ENCODE measurements at regions of chr1 and their contacts with region 1.

Region 1: DNA sequence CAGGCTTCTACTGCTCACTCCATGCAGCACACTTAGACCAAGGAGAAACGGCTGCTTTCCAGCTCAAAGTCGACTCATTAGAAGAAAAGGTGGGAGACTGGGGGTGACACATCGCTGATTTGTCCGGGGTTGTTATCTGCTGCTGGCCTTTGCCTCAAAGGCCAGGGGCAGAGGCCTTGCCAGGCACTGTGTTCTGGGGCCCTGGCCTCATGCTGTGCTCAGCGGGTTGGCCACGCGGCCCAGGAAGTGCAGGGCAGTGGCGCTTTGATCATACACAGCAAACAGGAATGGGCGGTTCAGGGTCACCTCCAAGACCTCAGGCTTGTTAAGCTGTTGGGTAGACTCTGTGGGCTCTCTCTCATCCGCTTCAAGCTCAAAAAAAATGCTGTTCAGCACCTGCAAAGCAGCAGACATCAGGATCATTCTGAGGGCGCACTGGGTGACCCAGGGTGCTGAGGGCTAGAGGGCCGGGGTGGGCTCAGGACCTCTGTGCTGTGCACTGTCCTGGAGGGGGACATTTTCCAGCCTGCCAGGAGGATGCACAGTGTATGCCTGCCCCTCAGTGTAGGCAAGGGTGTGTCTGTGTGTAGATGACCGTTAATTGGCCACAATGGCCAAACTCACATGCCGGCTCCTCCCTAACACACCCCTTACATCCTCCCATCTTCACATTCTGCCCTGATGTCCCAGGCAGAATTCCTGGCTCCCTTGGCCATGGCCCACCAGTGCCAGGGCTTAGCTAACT is 10.8 kb downstream of the AGT start:
- DNase-seq: peak; percentile 97
- ATAC-seq: peak; percentile 89
- H3K4me3 ChIP-seq: peak overlapping the region in 1 of 3 experiments; percentile 32; a peak in 2 of 6 replicates
- H3K27ac ChIP-seq: peak overlapping the region; percentile 89
- H3K4me1 ChIP-seq: peaks cover 89% of the 10 kb centered on the region
- H3K27me3 ChIP-seq: no peaks in the 10 kb centered on the region
- CTCF ChIP-seq: 0 out of 2 replicates have a peak, but pooled peaks have one; percentile 21
- EP300 ChIP-seq: peak in 1 of 2 experiments; percentile 94; a peak in 3 of 4 replicates
- POLR2A ChIP-seq: no peak; a peak in 1 of 4 replicates
- RAD21 ChIP-seq: no peak; the same call in 1 of the 2 replicates

Region 2: GRCh38 chr1:230495891-230496385 is 207.2 kb before region 1 on chr1:
- CTCF ChIA-PET with region 1: no interaction called
- POLR2A ChIA-PET with region 1: no interaction called
- in situ Hi-C with region 1: no loop called
- intact Hi-C with region 1: no loop called
- DNase-seq: no peak
- ATAC-seq: no peak
- H3K4me3 ChIP-seq: no peak overlapping the region
- H3K27ac ChIP-seq: no peak overlapping the region
- H3K4me1 ChIP-seq: no peaks in the 10 kb centered on the region
- H3K27me3 ChIP-seq: peaks cover 0 to 19% of the 10 kb centered on the region in 2 experiments; a peak in 3 of 5 replicates
- CTCF ChIP-seq: no peak
- EP300 ChIP-seq: no peak
- POLR2A ChIP-seq: no peak
- RAD21 ChIP-seq: no peak

Region 3: GRCh38 chr1:230609208-230609607 is 93.9 kb before region 1 on chr1:
- CTCF ChIA-PET with region 1: no interaction called
- POLR2A ChIA-PET with region 1: no interaction called
- in situ Hi-C with region 1: no loop called
- intact Hi-C with region 1: no loop called
- DNase-seq: no peak
- ATAC-seq: no peak
- H3K4me3 ChIP-seq: no peak overlapping the region
- H3K27ac ChIP-seq: no peak overlapping the region
- H3K4me1 ChIP-seq: peaks cover 22% of the 10 kb centered on the region
- H3K27me3 ChIP-seq: no peaks in the 10 kb centered on the region; a peak in 1 of 5 replicates
- CTCF ChIP-seq: no peak
- EP300 ChIP-seq: no peak
- POLR2A ChIP-seq: no peak
- RAD21 ChIP-seq: no peak

Region 4: DNA sequence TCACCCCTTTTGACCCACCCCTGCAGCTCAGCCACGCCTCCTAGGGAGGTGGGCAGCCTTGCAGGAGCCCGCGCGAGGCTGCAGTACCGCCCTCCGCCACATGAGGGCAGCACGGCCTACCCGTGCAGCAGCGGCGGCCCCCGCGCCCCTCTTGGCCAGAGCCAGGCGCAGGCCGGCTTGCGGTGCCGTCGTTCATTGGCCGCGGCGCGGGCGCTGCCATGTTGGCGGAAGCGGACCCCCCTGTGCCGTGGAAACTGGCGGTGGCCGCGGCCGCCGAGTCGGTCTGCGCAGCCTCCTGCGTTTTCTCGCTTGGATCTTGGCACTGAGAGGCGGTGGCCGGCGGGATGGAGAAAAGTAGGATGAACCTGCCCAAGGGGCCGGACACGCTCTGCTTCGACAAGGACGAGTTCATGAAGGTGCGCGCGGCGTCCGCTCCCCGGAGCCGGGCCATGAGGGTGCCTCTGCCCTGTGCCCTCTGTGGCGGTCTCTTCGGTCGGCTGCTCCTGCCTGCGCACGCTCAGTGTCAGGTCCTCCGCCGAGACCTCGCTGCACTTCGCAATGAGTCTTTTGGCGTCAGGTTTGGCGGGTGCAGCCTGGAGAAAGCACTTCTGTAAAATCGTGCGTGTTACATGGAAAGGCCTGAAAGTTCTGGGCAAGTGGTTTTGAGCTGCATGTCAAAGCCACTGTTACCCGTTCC is 60.7 kb before region 1 on chr1 and contains the start of gene COG2:
- CTCF ChIA-PET with region 1: no interaction called
- POLR2A ChIA-PET with region 1: interaction called, 84 read pairs
- in situ Hi-C with region 1: loop called (anchors 5 kb)
- intact Hi-C with region 1: loop called (anchors 1 kb)
- DNase-seq: peak; percentile 77
- ATAC-seq: peak; percentile 95
- H3K4me3 ChIP-seq: peak within 1 kb of the TSS; percentile 85 to 96 (median 88)
- H3K27ac ChIP-seq: peak within 1 kb of the TSS; percentile 86
- H3K4me1 ChIP-seq: peaks cover 75% of the 10 kb centered on the region
- H3K27me3 ChIP-seq: no peaks in the 10 kb centered on the region; a peak in 1 of 5 replicates
- CTCF ChIP-seq: peak; percentile 96
- EP300 ChIP-seq: no peak; a peak in 1 of 4 replicates
- POLR2A ChIP-seq: peak; percentile 67 to 88
- RAD21 ChIP-seq: peak; percentile 93
- total RNA-seq, gene COG2: 36.3 and 51.3 TPM in 2 replicates

Region 5: DNA sequence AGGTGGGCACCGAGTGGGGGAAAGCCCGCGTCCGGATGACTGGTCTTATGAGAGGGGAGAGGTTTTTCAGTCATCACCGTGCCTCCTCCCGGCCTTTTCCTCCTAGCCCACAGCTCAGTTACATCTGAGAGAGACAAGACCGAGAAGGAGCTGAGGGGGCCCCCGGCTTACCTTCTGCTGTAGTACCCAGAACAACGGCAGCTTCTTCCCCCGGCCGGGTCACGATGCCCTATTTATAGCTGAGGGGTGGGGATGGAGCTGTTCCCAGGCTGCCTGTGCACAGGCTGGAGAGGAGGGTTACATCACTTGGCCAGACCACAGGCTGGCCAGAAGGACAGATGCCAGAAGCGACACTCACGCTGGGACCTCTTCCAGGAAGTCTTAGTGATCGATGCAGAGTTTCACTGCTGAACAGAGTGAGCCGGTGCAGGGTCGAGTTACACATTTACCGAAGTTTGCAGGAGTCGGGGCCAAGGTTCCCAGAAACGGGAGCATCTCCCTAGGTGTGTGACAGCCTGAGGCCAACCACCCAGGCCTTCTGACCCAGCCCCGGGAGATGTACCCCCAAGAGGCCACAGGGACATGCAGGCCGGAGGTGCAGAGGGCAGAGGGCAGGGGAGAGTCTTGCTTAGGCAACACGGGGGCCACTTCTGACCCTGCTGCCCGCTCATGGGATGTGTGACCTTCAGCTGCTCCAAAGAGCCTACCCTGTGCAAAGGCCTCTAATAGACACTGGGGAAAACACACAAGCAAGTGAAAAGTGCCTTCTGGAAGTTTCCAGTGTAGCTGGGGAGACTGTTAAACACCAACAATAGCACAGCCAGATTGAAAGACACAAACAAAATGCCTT is 11.0 kb after region 1 on chr1 and contains the start of gene AGT:
- CTCF ChIA-PET with region 1: no interaction called
- POLR2A ChIA-PET with region 1: interaction called, 94 read pairs
- in situ Hi-C with region 1: no loop called
- intact Hi-C with region 1: no loop called
- DNase-seq: peak; percentile 95
- ATAC-seq: peak; percentile 85
- H3K4me3 ChIP-seq: peak within 1 kb of the TSS; percentile 83 to 92 (median 90)
- H3K27ac ChIP-seq: peak within 1 kb of the TSS; percentile 93
- H3K4me1 ChIP-seq: peaks cover 61% of the 10 kb centered on the region
- H3K27me3 ChIP-seq: peaks cover 0 to 2% of the 10 kb centered on the region in 2 experiments; a peak in 1 of 5 replicates
- CTCF ChIP-seq: peak; percentile 37
- EP300 ChIP-seq: peak; percentile 76 to 95; a peak in 3 of 4 replicates
- POLR2A ChIP-seq: peak in 1 of 2 experiments; percentile 95; a peak in 2 of 4 replicates
- RAD21 ChIP-seq: peak; percentile 28; the same call in 1 of the 2 replicates
- total RNA-seq, gene AGT: 378 and 892 TPM in 2 replicates

Region 6: GRCh38 chr1:230753586-230754251 is 50.6 kb after region 1 on chr1:
- CTCF ChIA-PET with region 1: no interaction called
- POLR2A ChIA-PET with region 1: interaction called, 25 read pairs
- in situ Hi-C with region 1: no loop called
- intact Hi-C with region 1: no loop called
- DNase-seq: peak; percentile 30
- ATAC-seq: peak; percentile 57
- H3K4me3 ChIP-seq: peak overlapping the region; percentile 35 to 68 (median 57)
- H3K27ac ChIP-seq: peak overlapping the region; percentile 40
- H3K4me1 ChIP-seq: peaks cover 88% of the 10 kb centered on the region
- H3K27me3 ChIP-seq: no peaks in the 10 kb centered on the region
- CTCF ChIP-seq: no peak
- EP300 ChIP-seq: no peak
- POLR2A ChIP-seq: no peak
- RAD21 ChIP-seq: no peak

Region 7: DNA sequence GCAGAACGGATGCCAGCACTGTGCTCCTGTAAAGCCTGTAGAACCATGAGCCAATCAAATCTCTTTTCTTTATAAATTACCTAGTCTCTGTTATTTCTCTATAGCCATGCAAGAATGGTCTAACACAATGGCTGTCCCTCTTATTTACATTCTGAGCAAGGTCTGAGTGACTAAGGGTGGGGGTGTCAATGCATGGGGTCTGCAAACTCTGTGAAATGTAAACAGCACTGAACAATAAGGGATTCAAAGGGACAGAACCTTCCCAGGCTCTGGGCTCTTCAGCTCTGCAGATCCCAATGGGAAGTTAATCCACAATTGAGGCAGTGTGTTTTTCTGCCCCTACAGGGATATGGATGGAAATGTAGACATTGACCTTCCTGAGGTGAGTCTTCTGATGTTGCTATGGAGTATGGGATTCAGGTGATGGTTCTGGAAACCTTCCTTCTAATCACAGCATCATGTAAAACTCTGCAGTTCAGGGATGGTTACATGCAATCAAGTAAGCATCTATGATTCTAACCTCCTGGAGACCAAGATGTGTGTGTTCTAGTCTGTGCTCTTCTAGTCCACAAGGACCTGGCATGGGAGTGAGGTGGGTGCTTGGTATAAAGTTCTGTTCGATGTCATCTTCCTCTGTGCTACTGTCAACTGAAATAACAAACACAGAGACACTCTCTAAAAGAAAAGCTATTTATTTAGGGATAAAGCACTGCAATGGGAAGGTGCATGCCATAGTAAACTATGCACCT is 82.7 kb after region 1 on chr1:
- CTCF ChIA-PET with region 1: no interaction called
- POLR2A ChIA-PET with region 1: no interaction called
- in situ Hi-C with region 1: no loop called
- intact Hi-C with region 1: no loop called
- DNase-seq: peak; percentile 86
- ATAC-seq: peak; percentile 76
- H3K4me3 ChIP-seq: no peak overlapping the region; a peak in 1 of 6 replicates
- H3K27ac ChIP-seq: peak overlapping the region; percentile 23
- H3K4me1 ChIP-seq: peaks cover 56% of the 10 kb centered on the region
- H3K27me3 ChIP-seq: peaks cover 0 to 4% of the 10 kb centered on the region in 2 experiments; a peak in 2 of 5 replicates
- CTCF ChIP-seq: no peak
- EP300 ChIP-seq: peak in 1 of 2 experiments; percentile 65; a peak in 2 of 4 replicates
- POLR2A ChIP-seq: no peak
- RAD21 ChIP-seq: no peak

Region 8: GRCh38 chr1:230930986-230931385 is 227.9 kb after region 1 on chr1:
- CTCF ChIA-PET with region 1: no interaction called
- POLR2A ChIA-PET with region 1: no interaction called
- in situ Hi-C with region 1: no loop called
- intact Hi-C with region 1: no loop called
- DNase-seq: no peak
- ATAC-seq: no peak
- H3K4me3 ChIP-seq: no peak overlapping the region
- H3K27ac ChIP-seq: no peak overlapping the region
- H3K4me1 ChIP-seq: no peaks in the 10 kb centered on the region
- H3K27me3 ChIP-seq: no peaks in the 10 kb centered on the region
- CTCF ChIP-seq: no peak
- EP300 ChIP-seq: no peak
- POLR2A ChIP-seq: no peak
- RAD21 ChIP-seq: no peak